PC-3 (cell line): ENCODE measurements at regions of chr16 and their contacts with region 1.

Region 1: DNA sequence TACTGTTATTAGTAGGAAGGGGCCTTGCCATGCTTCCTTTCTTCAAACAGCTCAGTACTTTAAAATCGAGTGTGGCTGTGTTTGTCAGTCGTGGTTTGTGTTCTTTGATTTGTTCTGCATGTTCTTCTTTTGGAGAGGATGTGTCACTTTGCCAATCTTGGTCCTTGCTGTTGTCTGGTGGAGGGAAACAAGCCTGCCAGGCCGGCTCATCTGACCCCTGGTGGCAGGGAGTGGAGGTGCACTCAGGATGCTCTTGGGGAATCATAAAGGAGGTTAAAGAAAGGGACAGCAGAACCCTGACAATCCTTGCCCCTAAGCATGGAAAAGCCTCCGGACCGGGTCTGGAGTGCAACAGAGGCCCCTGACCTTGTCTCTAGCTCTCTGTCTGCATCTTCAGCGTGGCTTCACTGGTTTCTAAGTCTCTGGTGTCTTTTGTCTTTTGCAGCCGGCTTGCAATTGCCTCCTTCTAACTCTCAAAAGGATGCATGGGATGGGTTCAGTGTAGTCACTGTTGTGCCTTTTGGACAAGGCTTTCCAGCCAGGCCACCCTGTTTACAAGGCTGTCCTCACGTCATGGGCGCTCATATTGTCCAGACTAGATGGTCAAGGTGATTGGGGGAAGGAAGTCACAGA is 135.8 kb downstream of the WWOX start:
- DNase-seq: peak; percentile 75
- ATAC-seq: 0 out of 2 replicates have a peak, but pooled peaks have one; percentile 44
- H3K4me3 ChIP-seq: no peak overlapping the region
- H3K27ac ChIP-seq: no peak overlapping the region
- H3K4me1 ChIP-seq: peaks cover 14% of the 10 kb centered on the region
- H3K27me3 ChIP-seq: no peaks in the 10 kb centered on the region
- CTCF ChIP-seq: peak; percentile 80

Region 2: GRCh38 chr16:78122774-78123315 is 112.4 kb before region 1 on chr16:
- CTCF ChIA-PET with region 1: no interaction called
- POLR2A ChIA-PET with region 1: no interaction called
- intact Hi-C with region 1: loop called (anchors 1 kb)
- DNase-seq: peak; percentile 72
- ATAC-seq: peak; percentile 86
- H3K4me3 ChIP-seq: no peak overlapping the region
- H3K27ac ChIP-seq: no peak overlapping the region
- H3K4me1 ChIP-seq: peaks cover 3% of the 10 kb centered on the region; the same call in 1 of the 2 replicates
- H3K27me3 ChIP-seq: no peaks in the 10 kb centered on the region
- CTCF ChIP-seq: peak; percentile 61

Region 3: GRCh38 chr16:78184238-78185183 is 50.8 kb before region 1 on chr16:
- CTCF ChIA-PET with region 1: no interaction called
- POLR2A ChIA-PET with region 1: no interaction called
- intact Hi-C with region 1: loop called (anchors 1 kb)
- DNase-seq: peak; percentile 73
- ATAC-seq: peak; percentile 91
- H3K4me3 ChIP-seq: peak overlapping the region; percentile 58
- H3K27ac ChIP-seq: peak overlapping the region; percentile 34
- H3K4me1 ChIP-seq: peaks cover 19% of the 10 kb centered on the region
- H3K27me3 ChIP-seq: no peaks in the 10 kb centered on the region
- CTCF ChIP-seq: no peak

Region 4: GRCh38 chr16:78209951-78210661 is 25.2 kb before region 1 on chr16:
- CTCF ChIA-PET with region 1: no interaction called
- POLR2A ChIA-PET with region 1: no interaction called
- intact Hi-C with region 1: loop called (anchors 2 kb)
- DNase-seq: peak; percentile 90
- ATAC-seq: peak; percentile 83
- H3K4me3 ChIP-seq: peak overlapping the region; percentile 42; the same call in 1 of the 2 replicates
- H3K27ac ChIP-seq: peak overlapping the region; percentile 74
- H3K4me1 ChIP-seq: peaks cover 36% of the 10 kb centered on the region
- H3K27me3 ChIP-seq: no peaks in the 10 kb centered on the region
- CTCF ChIP-seq: no peak

Region 5: GRCh38 chr16:78220571-78220970 is 14.7 kb before region 1 on chr16:
- CTCF ChIA-PET with region 1: no interaction called
- POLR2A ChIA-PET with region 1: no interaction called
- intact Hi-C with region 1: no loop called
- DNase-seq: no peak
- ATAC-seq: no peak
- H3K4me3 ChIP-seq: no peak overlapping the region
- H3K27ac ChIP-seq: no peak overlapping the region
- H3K4me1 ChIP-seq: no peaks in the 10 kb centered on the region
- H3K27me3 ChIP-seq: no peaks in the 10 kb centered on the region
- CTCF ChIP-seq: no peak